MCF 10A (cell line): ENCODE measurements at regions of chrX and their contacts with region 1.

Region 1: DNA sequence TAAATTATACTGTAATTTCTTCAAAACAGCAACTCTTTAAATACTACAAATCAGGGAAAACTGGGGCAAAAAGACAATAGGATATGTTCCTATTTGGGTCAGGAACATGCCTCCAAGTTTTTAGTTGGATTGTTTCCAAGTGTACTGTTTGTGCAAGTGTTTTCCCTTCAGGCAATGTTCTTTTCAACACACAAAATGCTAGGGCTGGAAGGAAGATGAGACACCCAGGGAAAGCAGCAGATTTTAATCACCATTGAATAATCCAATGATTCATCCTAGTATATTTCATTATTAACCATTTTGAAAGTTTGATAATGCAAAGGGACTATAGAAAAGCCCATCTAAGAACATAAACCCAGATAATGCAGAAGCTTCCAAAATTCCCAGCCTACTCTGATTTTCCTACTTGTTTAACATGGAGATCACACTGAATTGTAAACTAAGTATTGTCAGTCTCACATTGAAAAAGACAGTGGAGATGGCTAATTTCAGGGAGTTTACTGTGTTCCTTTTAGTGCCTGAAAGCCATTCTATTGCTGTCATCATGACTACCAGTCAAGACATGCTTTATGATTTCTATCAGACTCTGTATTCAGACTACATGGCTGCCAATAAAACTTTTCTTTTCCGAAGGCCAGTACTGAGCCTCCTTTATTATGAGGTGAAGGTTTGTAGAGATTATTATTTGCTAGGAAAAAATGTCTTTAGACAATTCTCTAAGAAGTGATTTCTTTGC is 38.6 kb downstream of the COL4A6 start:
- DNase-seq: peak; percentile 90
- H3K4me3 Mint-ChIP-seq: peak overlapping the region; percentile 57
- H3K27ac Mint-ChIP-seq: peak overlapping the region; percentile 82
- H3K4me1 Mint-ChIP-seq: peaks cover 65% of the 10 kb centered on the region
- H3K27me3 Mint-ChIP-seq: peaks cover 21% of the 10 kb centered on the region
- CTCF ChIP-seq: no peak

Region 2: GRCh38 chrX:108312938-108313337 is 86.7 kb before region 1 on chrX:
- CTCF ChIA-PET with region 1: no interaction called
- POLR2A ChIA-PET with region 1: interaction called, 3 read pairs
- intact Hi-C with region 1: loop called (anchors 5 kb)
- DNase-seq: peak; percentile 86
- H3K4me3 Mint-ChIP-seq: no peak overlapping the region
- H3K27ac Mint-ChIP-seq: peak overlapping the region; percentile 83
- H3K4me1 Mint-ChIP-seq: peaks cover 42% of the 10 kb centered on the region
- H3K27me3 Mint-ChIP-seq: peaks cover 88% of the 10 kb centered on the region
- CTCF ChIP-seq: no peak

Region 3: DNA sequence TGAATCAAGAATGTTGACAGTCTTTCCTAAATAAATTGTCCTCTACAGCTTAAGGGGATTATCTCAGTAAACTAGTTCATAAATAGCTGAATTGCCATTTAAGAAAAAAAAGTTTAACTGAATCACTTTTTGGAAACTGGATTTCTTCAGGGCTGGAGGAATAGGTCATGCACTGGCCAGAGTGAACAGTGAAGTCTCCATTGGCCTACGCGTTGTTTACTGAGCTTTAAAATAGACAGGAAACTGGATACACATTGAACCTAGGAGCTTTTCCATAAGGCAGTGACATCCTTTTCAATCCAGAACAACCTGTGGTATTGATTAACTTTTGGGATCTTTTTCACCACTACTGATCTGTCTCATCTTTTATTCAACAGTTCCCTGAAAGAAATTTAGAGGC is 19.4 kb before region 1 on chrX:
- CTCF ChIA-PET with region 1: no interaction called
- POLR2A ChIA-PET with region 1: interaction called, 13 read pairs
- intact Hi-C with region 1: no loop called
- DNase-seq: no peak
- H3K4me3 Mint-ChIP-seq: no peak overlapping the region
- H3K27ac Mint-ChIP-seq: no peak overlapping the region
- H3K4me1 Mint-ChIP-seq: no peaks in the 10 kb centered on the region
- H3K27me3 Mint-ChIP-seq: peaks cover 37% of the 10 kb centered on the region
- CTCF ChIP-seq: no peak

Region 4: GRCh38 chrX:108447303-108447702 is 47.7 kb after region 1 on chrX:
- CTCF ChIA-PET with region 1: no interaction called
- POLR2A ChIA-PET with region 1: interaction called, 106 read pairs
- intact Hi-C with region 1: no loop called
- DNase-seq: peak; percentile 62
- H3K4me3 Mint-ChIP-seq: peak overlapping the region; percentile 44
- H3K27ac Mint-ChIP-seq: peak overlapping the region; percentile 7
- H3K4me1 Mint-ChIP-seq: peaks cover 9% of the 10 kb centered on the region
- H3K27me3 Mint-ChIP-seq: peaks cover 34% of the 10 kb centered on the region
- CTCF ChIP-seq: no peak